Activated CD4-positive, alpha-beta T cell treated with anti-CD3 and anti-CD28 coated beads for 36 hours (primary cell): ENCODE measurements at regions of chr18 and their contacts with region 1.

Region 1: GRCh38 chr18:59988098-59988706 is 88.4 kb downstream of the PMAIP1 start:
- DNase-seq: peak; percentile 78
- ATAC-seq: peak; percentile 60
- H3K4me3 Mint-ChIP-seq: no peak overlapping the region
- H3K27ac Mint-ChIP-seq: no peak overlapping the region
- H3K4me1 Mint-ChIP-seq: no peaks in the 10 kb centered on the region
- H3K27me3 Mint-ChIP-seq: peaks cover 13% of the 10 kb centered on the region

Region 2: DNA sequence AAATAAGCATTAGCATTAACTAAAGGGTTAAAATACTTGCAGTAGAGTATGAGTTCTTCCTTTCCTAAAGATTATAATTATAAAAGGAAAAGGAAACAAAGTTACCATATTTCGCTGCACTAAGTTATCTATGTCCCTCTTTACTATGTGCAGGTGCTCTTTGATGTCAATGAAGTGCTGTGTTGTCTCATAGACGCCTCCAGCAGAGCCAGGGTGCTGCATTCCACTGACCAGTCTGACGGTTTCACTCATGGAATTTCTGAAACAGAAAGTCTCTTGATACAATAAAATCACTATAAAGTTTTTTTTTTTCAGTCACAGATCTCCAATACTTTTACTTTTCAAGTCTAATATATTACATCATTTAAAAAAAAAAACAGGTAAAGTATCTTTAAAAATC is 655.2 kb before region 1 on chr18:
- CTCF ChIA-PET with region 1: no interaction called
- POLR2A ChIA-PET with region 1: no interaction called
- intact Hi-C with region 1: no loop called
- DNase-seq: no peak
- ATAC-seq: no peak
- H3K4me3 Mint-ChIP-seq: no peak overlapping the region
- H3K27ac Mint-ChIP-seq: no peak overlapping the region
- H3K4me1 Mint-ChIP-seq: no peaks in the 10 kb centered on the region
- H3K27me3 Mint-ChIP-seq: no peaks in the 10 kb centered on the region

Region 3: DNA sequence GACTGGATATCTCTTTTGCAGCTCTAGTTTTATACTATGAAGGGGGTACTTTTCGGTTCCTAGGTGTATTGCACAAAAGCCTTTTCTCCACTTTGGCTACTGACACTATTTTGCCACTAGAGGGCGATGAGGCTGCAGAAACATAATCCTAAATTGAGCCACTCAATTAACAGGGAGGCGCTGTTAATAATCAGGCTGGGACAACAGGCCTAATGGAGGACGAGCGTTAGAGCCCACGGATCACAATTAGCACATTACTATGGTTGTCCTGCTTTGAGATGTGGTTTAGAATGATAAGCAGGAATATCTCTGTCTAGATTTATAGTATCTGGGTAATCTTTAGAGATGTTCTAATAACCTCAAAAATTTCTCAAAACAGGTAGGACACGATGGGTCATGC is 150.6 kb before region 1 on chr18:
- CTCF ChIA-PET with region 1: interaction called, 6 read pairs
- POLR2A ChIA-PET with region 1: no interaction called
- intact Hi-C with region 1: loop called (anchors 2 to 5 kb)
- DNase-seq: peak; percentile 56
- ATAC-seq: peak; percentile 60
- H3K4me3 Mint-ChIP-seq: no peak overlapping the region
- H3K27ac Mint-ChIP-seq: no peak overlapping the region
- H3K4me1 Mint-ChIP-seq: peaks cover 10% of the 10 kb centered on the region
- H3K27me3 Mint-ChIP-seq: peaks cover 5% of the 10 kb centered on the region

Region 4: DNA sequence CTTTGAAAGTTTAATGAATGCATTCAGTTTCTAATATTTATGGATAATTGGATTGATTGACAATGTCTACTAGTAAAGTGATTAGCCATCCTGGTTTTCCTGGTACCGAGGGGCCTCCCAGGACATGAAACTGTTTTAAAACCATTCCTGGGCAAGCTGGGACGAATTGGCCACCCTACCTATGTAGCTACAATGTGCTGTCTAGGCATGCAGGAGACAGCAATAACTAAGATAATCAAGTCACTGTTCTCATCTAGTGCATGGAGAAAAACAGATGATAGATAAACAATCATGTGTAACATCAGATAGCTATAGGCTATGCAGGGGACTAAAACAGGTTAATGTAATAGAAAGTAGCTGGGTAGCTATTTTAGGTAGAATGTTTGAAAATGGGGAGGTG is 21.3 kb before region 1 on chr18:
- CTCF ChIA-PET with region 1: interaction called, 11 read pairs
- POLR2A ChIA-PET with region 1: no interaction called
- intact Hi-C with region 1: no loop called
- DNase-seq: no peak
- ATAC-seq: no peak
- H3K4me3 Mint-ChIP-seq: no peak overlapping the region
- H3K27ac Mint-ChIP-seq: no peak overlapping the region
- H3K4me1 Mint-ChIP-seq: peaks cover 4% of the 10 kb centered on the region
- H3K27me3 Mint-ChIP-seq: peaks cover 21% of the 10 kb centered on the region

Region 5: GRCh38 chr18:60413944-60414547 is 425.8 kb after region 1 on chr18:
- CTCF ChIA-PET with region 1: interaction called, 3 read pairs
- POLR2A ChIA-PET with region 1: no interaction called
- intact Hi-C with region 1: loop called in 1 of 2 experiments (anchors 2 kb)
- DNase-seq: peak; percentile 20
- ATAC-seq: no peak
- H3K4me3 Mint-ChIP-seq: no peak overlapping the region
- H3K27ac Mint-ChIP-seq: no peak overlapping the region
- H3K4me1 Mint-ChIP-seq: no peaks in the 10 kb centered on the region
- H3K27me3 Mint-ChIP-seq: no peaks in the 10 kb centered on the region

Region 6: DNA sequence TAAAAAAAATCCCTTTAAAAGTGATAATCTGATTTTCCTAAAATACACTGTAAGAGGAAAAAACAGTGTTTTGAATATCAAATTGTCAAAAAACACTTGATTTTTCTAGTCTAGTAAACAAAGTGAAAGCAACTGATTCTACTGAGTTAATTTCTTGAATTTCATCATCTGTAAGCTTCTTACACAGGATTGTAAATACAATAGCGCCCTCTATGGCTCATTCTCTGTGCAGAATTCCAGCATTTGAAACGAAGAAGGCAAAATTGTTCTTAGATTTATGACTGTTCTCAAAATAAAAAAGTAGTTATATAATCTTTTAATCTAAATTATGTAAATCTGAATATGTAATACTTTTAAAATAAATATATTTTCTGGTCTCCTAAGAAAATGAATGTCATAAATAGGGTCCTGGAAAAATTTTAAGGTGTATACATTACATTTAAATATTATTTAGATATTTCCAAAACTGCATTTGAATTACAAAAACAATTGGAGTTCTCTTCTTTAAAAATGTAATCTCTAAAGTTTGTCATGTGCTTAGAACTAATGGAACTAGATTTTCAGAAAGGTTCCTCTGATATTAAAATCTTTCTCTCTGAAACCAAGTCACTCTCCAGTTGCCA is 561.2 kb after region 1 on chr18:
- CTCF ChIA-PET with region 1: interaction called, 21 read pairs
- POLR2A ChIA-PET with region 1: no interaction called
- intact Hi-C with region 1: loop called (anchors 1 to 5 kb)
- DNase-seq: peak; percentile 16
- ATAC-seq: no peak
- H3K4me3 Mint-ChIP-seq: no peak overlapping the region
- H3K27ac Mint-ChIP-seq: no peak overlapping the region
- H3K4me1 Mint-ChIP-seq: no peaks in the 10 kb centered on the region
- H3K27me3 Mint-ChIP-seq: no peaks in the 10 kb centered on the region

Region 7: DNA sequence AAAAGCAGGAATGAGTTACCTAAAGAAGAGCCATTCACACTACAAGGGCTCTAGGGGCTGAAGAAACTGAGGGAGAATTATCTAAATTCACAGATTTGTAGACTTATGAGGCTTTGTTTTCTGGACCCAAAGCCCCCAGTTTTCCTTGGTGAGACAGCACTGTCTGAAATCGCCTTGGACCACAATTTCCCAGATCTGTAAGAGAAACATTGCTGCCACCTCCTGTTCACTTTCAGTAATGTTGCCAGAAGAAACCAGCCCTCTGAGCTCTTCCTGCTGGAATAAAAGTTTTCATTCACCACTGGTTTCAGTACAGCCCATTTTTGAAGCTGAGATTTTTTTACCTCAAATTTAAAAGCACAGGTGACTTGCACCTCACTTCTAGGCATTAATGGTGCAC is 1514.3 kb after region 1 on chr18:
- CTCF ChIA-PET with region 1: interaction called, 3 read pairs
- POLR2A ChIA-PET with region 1: no interaction called
- intact Hi-C with region 1: loop called (anchors 2 to 10 kb)
- DNase-seq: peak; percentile 25
- ATAC-seq: no peak
- H3K4me3 Mint-ChIP-seq: no peak overlapping the region
- H3K27ac Mint-ChIP-seq: no peak overlapping the region
- H3K4me1 Mint-ChIP-seq: no peaks in the 10 kb centered on the region
- H3K27me3 Mint-ChIP-seq: peaks cover 10% of the 10 kb centered on the region

Region 8: DNA sequence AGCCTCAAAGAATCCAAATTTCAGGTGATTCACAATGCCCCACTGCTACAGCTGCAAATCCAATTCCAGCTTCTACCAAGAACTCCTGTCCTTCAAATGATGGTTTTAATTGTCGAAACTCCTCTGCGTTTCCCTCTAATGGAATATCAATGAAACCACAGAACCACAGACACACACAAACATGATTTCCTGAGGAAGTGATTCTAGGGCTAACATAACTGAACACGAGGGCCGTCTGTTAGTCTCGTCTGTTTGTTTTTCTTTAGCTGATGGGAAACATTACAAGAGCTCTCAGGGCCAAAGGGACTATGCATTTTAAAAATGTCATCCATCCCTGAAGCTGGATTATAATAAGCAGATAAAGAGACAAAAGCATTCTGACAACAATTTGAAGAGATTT is 1845.2 kb after region 1 on chr18:
- CTCF ChIA-PET with region 1: no interaction called
- POLR2A ChIA-PET with region 1: no interaction called
- intact Hi-C with region 1: no loop called
- DNase-seq: no peak
- ATAC-seq: no peak
- H3K4me3 Mint-ChIP-seq: no peak overlapping the region
- H3K27ac Mint-ChIP-seq: peak overlapping the region; percentile 28
- H3K4me1 Mint-ChIP-seq: peaks cover 17% of the 10 kb centered on the region
- H3K27me3 Mint-ChIP-seq: peaks cover 1% of the 10 kb centered on the region